ENCODE measurements at regions of chr15 and their contacts with region 1.

Region 1: DNA sequence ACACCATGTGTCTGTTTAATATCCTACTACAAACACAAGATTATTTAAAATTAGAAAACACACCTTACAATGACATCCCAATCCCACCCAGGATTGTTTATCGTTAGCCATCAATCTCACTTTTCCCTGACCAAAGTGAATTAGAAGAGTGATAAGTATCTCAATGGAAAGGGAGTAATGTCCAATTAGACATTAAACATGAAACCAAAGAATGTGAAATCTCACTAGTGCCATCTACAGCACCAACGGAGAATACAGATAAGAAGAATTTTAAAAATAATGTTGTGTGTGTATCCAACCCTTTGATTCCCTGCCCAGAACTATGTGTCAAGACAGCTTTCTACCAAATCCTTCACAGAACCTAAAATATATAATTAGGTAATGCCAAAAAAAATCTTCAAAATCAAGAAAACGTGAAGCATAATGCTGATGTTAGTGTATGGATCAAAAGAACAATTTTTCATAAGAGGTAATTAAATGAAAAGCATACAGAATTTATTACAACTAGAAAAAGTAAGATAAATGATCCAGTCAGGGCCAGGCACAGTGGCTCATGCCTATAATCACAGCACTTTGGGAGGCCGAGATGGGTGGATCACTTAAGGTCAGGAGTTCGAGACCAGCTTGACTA is 64.2 kb downstream of the SCAPER start:
- DNase-seq: peak in 1 of 9 experiments; percentile 11
- ATAC-seq: no peak
- H3K4me3 ChIP-seq: no peak overlapping the region
- H3K4me3 Mint-ChIP-seq: no peak overlapping the region
- H3K27ac ChIP-seq: no peak overlapping the region
- H3K27ac Mint-ChIP-seq: no peak overlapping the region
- H3K4me1 ChIP-seq: no peaks in the 10 kb centered on the region
- H3K4me1 Mint-ChIP-seq: peaks cover 24% of the 10 kb centered on the region
- H3K27me3 ChIP-seq: no peaks in the 10 kb centered on the region
- H3K27me3 Mint-ChIP-seq: no peaks in the 10 kb centered on the region
- CTCF ChIP-seq: peak; percentile 13

Region 2: DNA sequence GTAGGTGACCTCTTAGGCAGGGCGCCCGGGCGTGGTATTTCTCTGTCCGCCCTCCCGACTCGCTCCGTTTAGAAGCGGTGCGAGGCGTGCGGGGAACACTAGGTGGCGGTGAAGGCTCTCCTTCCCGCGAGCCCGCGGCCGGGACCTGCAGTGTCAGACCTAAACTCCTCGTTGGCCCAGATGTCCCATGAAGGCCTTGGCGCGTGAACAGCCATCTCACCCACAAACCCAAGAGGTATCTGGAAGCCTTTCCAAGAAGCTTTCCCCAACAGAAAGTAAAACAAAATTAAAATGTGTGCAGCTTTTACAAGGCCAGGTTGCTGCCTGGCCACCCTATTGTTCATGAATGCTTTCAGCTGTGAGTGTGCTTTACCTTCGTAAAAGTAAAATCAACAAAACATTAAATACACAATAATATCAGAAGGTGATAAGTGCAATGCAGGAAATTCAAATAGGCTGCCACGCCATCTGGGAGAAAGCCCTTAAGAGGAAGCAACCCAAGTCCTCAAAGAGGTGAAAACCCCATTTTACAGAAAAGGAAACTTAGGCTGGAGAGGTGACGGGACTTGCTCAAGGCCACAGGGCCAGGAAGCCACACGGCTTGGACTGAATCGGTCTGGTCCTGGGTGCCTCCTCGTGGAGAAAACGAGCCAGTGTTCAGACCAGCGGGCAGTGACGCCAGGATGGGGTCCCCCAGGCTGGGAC is 650.0 kb before region 1 on chr15:
- CTCF ChIA-PET with region 1: no interaction called
- POLR2A ChIA-PET with region 1: no interaction called
- intact Hi-C with region 1: loop called in 1 of 2 experiments (anchors 5 kb)
- DNase-seq: peak; percentile 28 to 78 (median 65)
- ATAC-seq: peak; percentile 77
- H3K4me3 ChIP-seq: no peak overlapping the region
- H3K4me3 Mint-ChIP-seq: peak overlapping the region; percentile 71
- H3K27ac ChIP-seq: no peak overlapping the region
- H3K27ac Mint-ChIP-seq: no peak overlapping the region
- H3K4me1 ChIP-seq: peaks cover 10% of the 10 kb centered on the region
- H3K4me1 Mint-ChIP-seq: peaks cover 14% of the 10 kb centered on the region
- H3K27me3 ChIP-seq: peaks cover 0 to 5% of the 10 kb centered on the region in 2 experiments
- H3K27me3 Mint-ChIP-seq: peaks cover 48% of the 10 kb centered on the region
- CTCF ChIP-seq: peak; percentile 62

Region 3: GRCh38 chr15:76235186-76235826 is 605.6 kb before region 1 on chr15:
- CTCF ChIA-PET with region 1: no interaction called
- POLR2A ChIA-PET with region 1: no interaction called
- intact Hi-C with region 1: loop called in 1 of 2 experiments (anchors 5 kb)
- DNase-seq: peak in 2 of 9 experiments; percentile 29 to 54
- ATAC-seq: peak; percentile 36
- H3K4me3 ChIP-seq: no peak overlapping the region
- H3K4me3 Mint-ChIP-seq: no peak overlapping the region
- H3K27ac ChIP-seq: no peak overlapping the region
- H3K27ac Mint-ChIP-seq: no peak overlapping the region
- H3K4me1 ChIP-seq: no peaks in the 10 kb centered on the region
- H3K4me1 Mint-ChIP-seq: no peaks in the 10 kb centered on the region
- H3K27me3 ChIP-seq: no peaks in the 10 kb centered on the region
- H3K27me3 Mint-ChIP-seq: no peaks in the 10 kb centered on the region
- CTCF ChIP-seq: peak; percentile 56

Measured in CD8-positive, alpha-beta T cell (primary cell).